CD8-positive, alpha-beta T cell (primary cell): ENCODE measurements at regions of chr7 and their contacts with region 1.

Region 1: DNA sequence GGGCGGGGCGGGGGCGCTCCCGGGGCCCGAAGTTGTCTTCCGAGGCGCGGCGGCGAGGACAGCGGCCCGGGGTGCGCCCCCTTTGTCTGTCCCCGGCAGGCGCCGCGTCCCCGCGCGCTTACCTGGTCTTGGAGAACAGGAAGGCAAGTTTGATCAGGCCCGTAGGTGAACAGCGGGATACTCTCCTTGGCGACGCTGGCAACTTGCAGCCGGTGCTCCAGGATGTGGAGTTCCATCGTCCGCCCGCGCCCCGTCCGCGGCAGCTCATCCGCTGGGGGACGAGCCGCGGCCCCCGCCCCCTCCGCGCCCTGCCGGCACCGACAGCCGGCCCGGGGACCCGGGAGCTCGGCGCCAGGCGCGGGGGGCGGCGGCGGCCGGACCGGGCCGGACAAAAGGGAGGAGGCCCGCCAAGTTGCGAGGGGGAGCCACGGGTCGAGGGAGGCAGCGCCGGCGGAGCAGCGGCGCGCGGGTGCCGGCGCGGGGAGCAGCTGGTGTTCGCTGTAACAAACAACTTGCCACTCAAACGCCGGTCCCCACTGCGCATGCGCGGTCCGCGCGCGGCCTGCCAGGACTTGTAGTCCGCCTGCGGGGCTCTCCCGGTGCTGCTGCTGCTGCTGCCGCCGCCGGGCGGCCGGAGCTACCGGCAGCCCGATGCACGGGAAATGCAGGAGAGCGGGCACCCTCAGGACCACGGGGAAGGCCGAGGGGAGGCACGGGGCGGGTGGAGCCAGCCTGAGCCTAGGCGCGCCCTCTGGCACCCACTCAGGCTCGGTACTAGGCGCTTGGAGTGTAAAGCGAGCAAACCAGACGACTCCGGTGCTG is 35.6 kb upstream of the SPDYE3 start:
- DNase-seq: peak; percentile 96 to 100 (median 98)
- ATAC-seq: peak; percentile 89
- H3K4me3 ChIP-seq: peak overlapping the region; percentile 46 to 50
- H3K4me3 Mint-ChIP-seq: peak overlapping the region; percentile 81
- H3K27ac ChIP-seq: peak overlapping the region; percentile 25 to 51
- H3K27ac Mint-ChIP-seq: peak overlapping the region; percentile 81
- H3K4me1 ChIP-seq: peaks cover 11% of the 10 kb centered on the region
- H3K4me1 Mint-ChIP-seq: peaks cover 12% of the 10 kb centered on the region
- H3K27me3 ChIP-seq: no peaks in the 10 kb centered on the region
- H3K27me3 Mint-ChIP-seq: no peaks in the 10 kb centered on the region
- CTCF ChIP-seq: peak; percentile 25

Region 2: GRCh38 chr7:99459087-99459486 is 812.8 kb before region 1 on chr7:
- CTCF ChIA-PET with region 1: no interaction called
- POLR2A ChIA-PET with region 1: no interaction called
- intact Hi-C with region 1: no loop called
- DNase-seq: peak in 4 of 9 experiments; percentile 13 to 45 (median 28)
- ATAC-seq: peak; percentile 65
- H3K4me3 ChIP-seq: no peak overlapping the region
- H3K4me3 Mint-ChIP-seq: no peak overlapping the region
- H3K27ac ChIP-seq: no peak overlapping the region
- H3K27ac Mint-ChIP-seq: peak overlapping the region; percentile 77
- H3K4me1 ChIP-seq: no peaks in the 10 kb centered on the region
- H3K4me1 Mint-ChIP-seq: peaks cover 33% of the 10 kb centered on the region
- H3K27me3 ChIP-seq: no peaks in the 10 kb centered on the region
- H3K27me3 Mint-ChIP-seq: no peaks in the 10 kb centered on the region
- CTCF ChIP-seq: peak; percentile 22

Region 3: GRCh38 chr7:100221231-100221718 is 50.7 kb before region 1 on chr7:
- CTCF ChIA-PET with region 1: interaction called, 4 read pairs
- POLR2A ChIA-PET with region 1: interaction called, 5 read pairs
- intact Hi-C with region 1: loop called (anchors 2 to 5 kb)
- DNase-seq: peak; percentile 75 to 95 (median 86)
- ATAC-seq: peak; percentile 67
- H3K4me3 ChIP-seq: peak overlapping the region; percentile 84 to 88
- H3K4me3 Mint-ChIP-seq: peak overlapping the region; percentile 94
- H3K27ac ChIP-seq: peak overlapping the region; percentile 93 to 98
- H3K27ac Mint-ChIP-seq: peak overlapping the region; percentile 99
- H3K4me1 ChIP-seq: peaks cover 52% of the 10 kb centered on the region
- H3K4me1 Mint-ChIP-seq: peaks cover 62% of the 10 kb centered on the region
- H3K27me3 ChIP-seq: no peaks in the 10 kb centered on the region
- H3K27me3 Mint-ChIP-seq: no peaks in the 10 kb centered on the region
- CTCF ChIP-seq: no peak

Region 4: GRCh38 chr7:100257017-100257416 is 14.9 kb before region 1 on chr7:
- CTCF ChIA-PET with region 1: no interaction called
- POLR2A ChIA-PET with region 1: no interaction called
- intact Hi-C with region 1: no loop called
- DNase-seq: no peak
- ATAC-seq: no peak
- H3K4me3 ChIP-seq: no peak overlapping the region
- H3K4me3 Mint-ChIP-seq: no peak overlapping the region
- H3K27ac ChIP-seq: no peak overlapping the region
- H3K27ac Mint-ChIP-seq: no peak overlapping the region
- H3K4me1 ChIP-seq: no peaks in the 10 kb centered on the region
- H3K4me1 Mint-ChIP-seq: no peaks in the 10 kb centered on the region
- H3K27me3 ChIP-seq: no peaks in the 10 kb centered on the region
- H3K27me3 Mint-ChIP-seq: no peaks in the 10 kb centered on the region
- CTCF ChIP-seq: no peak

Region 5: DNA sequence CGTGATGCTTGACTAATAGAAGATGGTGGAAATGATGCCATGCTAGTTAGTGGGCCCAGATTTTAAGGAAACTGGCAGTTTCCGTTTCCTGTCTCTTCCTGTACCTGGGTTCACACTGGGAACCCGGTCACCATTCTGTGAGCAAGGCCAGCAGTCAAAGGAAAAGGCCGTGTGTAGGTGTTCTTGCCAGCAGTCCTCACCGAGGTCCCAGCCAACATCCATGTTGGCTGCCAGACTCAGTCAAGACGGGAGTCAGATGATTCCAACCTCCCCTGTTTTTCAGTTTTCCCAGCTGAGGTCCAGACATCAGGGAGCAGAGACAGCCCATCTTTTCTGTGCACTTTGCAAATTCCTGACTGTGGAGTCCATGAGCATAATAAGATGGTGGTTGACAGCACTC is 70.8 kb after region 1 on chr7:
- CTCF ChIA-PET with region 1: no interaction called
- POLR2A ChIA-PET with region 1: interaction called, 4 read pairs
- intact Hi-C with region 1: loop called (anchors 1 to 5 kb)
- DNase-seq: no peak
- ATAC-seq: no peak
- H3K4me3 ChIP-seq: no peak overlapping the region
- H3K4me3 Mint-ChIP-seq: no peak overlapping the region
- H3K27ac ChIP-seq: peak overlapping the region in 1 of 2 experiments; percentile 28
- H3K27ac Mint-ChIP-seq: peak overlapping the region; percentile 77
- H3K4me1 ChIP-seq: peaks cover 9% of the 10 kb centered on the region
- H3K4me1 Mint-ChIP-seq: peaks cover 23% of the 10 kb centered on the region
- H3K27me3 ChIP-seq: no peaks in the 10 kb centered on the region
- H3K27me3 Mint-ChIP-seq: no peaks in the 10 kb centered on the region
- CTCF ChIP-seq: no peak